ENCODE measurements at regions of chr10 and their contacts with region 1.

Region 1: GRCh38 chr10:29895456-29895855 is 163.9 kb downstream of the JCAD start:
- DNase-seq: peak; percentile 33 to 93
- H3K4me3 ChIP-seq: peak overlapping the region; percentile 17 to 19
- H3K27ac ChIP-seq: peak overlapping the region; percentile 87 to 89
- H3K4me1 ChIP-seq: peaks cover 0 to 24% of the 10 kb centered on the region in 2 donors
- H3K27me3 ChIP-seq: no peaks in the 10 kb centered on the region
- CTCF ChIP-seq: no peak

Region 2: DNA sequence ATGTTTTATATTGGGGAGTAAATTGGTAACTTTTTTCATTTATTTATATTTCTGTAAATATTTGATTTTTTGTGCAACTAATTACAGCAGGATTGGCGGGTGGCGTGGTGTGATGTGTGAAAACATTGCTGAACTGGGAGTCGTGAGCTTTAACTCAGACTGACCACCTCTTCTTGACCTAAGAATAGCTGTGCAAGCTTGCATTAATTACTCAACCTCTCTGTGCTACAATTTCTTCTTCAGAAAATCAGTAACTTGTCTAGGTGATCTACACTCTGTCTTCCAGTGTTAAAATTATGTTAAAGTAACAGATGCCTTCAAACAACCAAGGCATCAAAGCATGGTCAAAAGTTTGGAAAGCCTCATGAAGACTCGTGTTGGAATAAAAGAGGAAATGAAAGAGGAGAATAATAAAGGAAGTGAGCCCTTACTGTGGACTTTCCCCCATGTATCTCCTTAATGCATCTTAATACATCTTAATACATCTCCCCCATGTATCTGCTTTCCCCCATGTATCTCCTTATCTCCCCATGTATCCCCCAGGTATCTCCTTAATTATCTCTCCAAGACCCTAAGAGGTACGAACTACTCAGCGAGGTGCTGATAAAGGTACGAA is 331.9 kb before region 1 on chr10:
- intact Hi-C with region 1: no loop called
- DNase-seq: no peak
- H3K4me3 ChIP-seq: no peak overlapping the region
- H3K27ac ChIP-seq: peak overlapping the region in 1 of 2 donors; percentile 49
- H3K4me1 ChIP-seq: peaks cover 0 to 9% of the 10 kb centered on the region in 2 donors
- H3K27me3 ChIP-seq: no peaks in the 10 kb centered on the region
- CTCF ChIP-seq: no peak

Region 3: DNA sequence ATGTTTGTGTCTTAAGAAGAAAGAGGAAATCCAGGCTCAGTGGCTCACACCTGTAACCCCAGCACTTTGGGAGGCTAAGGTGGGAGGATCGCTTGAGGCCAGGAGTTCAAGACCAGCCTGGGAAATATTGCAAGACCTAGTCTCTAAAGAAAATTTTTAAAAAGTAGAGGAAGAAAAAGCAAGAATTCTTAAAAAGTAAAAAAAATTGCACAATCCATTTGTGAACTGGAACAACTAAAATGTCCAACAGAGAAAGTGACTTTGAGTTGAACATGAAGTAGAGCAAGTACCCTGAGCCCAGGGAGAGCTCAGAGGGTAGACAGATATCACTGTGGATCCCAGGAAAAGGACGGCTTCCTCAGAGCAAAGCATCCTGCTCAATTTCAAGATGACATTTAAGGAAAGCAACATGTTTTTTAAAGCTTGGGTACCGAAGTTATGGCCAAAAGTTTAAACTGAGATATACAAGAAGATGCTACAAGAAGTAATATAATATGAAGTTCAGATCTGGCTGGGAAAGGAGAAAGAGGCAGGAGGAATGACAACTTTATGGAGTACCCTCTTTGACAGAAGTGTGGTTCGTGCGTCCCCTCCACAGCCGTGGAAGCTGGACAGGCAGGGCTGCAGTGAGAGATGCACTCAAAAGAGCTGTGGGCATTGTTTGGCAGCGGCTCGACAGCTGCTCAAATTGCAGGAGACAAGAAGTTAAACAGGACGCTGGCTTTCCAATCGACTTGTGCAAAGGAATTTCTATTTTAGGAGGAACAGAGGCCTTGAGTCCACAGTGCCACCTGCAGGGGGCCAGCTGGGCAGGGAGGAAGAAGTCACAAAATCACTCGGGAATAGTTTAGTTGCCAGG is 37.4 kb before region 1 on chr10:
- intact Hi-C with region 1: loop called (anchors 2 kb)
- DNase-seq: peak in 1 of 2 donors; percentile 91
- H3K4me3 ChIP-seq: peak overlapping the region in 1 of 2 donors; percentile 15
- H3K27ac ChIP-seq: peak overlapping the region; percentile 66 to 68
- H3K4me1 ChIP-seq: peaks cover 9 to 16% of the 10 kb centered on the region in 2 donors
- H3K27me3 ChIP-seq: no peaks in the 10 kb centered on the region
- CTCF ChIP-seq: peak; percentile 65 to 84 (median 81)

Region 4: DNA sequence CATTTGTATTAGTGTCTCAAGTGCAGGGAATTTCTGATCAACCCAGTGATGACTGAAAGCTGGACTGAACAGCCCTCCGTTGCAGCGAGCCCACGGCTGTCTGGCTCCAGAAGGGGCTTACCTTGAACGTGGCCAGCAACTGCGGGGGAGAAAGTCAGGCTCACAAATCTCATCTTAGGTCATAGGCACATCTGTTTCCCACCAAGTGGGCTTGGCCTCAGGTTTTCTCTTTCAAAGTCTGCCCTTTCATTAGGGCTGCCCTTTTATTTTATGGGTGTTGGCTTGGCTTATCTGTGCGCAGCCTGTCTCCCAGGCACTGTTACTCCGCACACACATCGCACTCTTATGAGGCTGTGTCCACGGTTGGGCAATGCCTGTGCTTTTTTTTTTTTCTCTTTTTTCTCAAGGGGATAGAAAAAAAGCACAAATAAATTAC is 14.1 kb before region 1 on chr10:
- intact Hi-C with region 1: loop called (anchors 1 kb)
- DNase-seq: peak in 1 of 2 donors; percentile 79
- H3K4me3 ChIP-seq: no peak overlapping the region
- H3K27ac ChIP-seq: peak overlapping the region; percentile 95 to 98
- H3K4me1 ChIP-seq: peaks cover 18 to 55% of the 10 kb centered on the region in 2 donors
- H3K27me3 ChIP-seq: no peaks in the 10 kb centered on the region
- CTCF ChIP-seq: no peak